PC-3 (cell line): ENCODE measurements at regions of chr3 and their contacts with region 1.

Region 1: DNA sequence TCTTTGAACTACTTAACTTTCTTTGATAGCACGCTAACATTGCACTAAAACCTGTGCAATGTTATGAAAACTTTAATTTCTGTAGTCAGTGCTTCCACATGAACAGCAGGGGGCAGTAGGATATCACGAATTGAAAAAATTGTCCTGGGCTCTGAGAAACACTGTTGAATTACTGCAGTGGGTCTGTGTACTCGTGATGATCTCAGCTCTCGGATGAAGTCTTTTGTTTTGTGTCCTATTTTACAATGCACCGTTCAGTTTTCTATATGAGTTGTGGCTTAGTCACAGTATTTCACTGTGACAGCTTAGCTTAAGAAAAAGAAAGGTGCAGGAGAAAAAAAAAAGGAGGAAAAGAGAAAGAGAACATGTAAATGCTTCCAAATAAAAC is 141.3 kb upstream of the CCDC54 start:
- DNase-seq: peak; percentile 95
- ATAC-seq: peak; percentile 81
- H3K4me3 ChIP-seq: peak overlapping the region; percentile 73
- H3K27ac ChIP-seq: peak overlapping the region; percentile 28
- H3K4me1 ChIP-seq: peaks cover 15% of the 10 kb centered on the region
- H3K27me3 ChIP-seq: no peaks in the 10 kb centered on the region
- CTCF ChIP-seq: peak; percentile 98

Region 2: DNA sequence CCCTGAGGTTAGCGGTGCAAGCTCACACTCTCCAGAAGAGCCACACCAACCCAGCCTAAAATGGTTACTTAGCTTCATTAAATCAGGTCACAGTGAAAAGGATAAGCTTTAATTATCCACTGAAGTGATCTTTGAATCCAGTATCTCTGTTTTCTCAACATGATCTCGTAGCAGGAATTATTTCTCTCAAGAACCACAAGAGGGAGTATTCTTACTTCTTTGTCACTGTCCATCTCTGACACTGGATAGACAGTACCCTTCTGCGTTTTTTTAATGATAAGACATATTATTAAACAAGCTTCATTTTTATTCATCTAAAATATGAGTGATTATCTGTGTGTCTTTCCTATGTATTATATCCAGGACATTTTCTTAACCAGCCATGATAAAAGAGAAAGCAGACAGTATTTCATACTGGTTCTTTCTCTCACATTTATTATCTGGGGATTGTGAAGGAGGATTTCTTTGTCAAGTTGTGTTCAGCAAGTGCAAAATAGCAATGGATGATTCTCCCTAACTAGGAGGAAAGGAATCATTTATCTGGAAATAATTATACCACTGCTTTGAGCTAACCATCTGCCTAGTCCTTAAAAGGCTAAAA is 36.0 kb after region 1 on chr3:
- CTCF ChIA-PET with region 1: interaction called, 12 read pairs
- POLR2A ChIA-PET with region 1: no interaction called
- intact Hi-C with region 1: loop called (anchors 1 kb)
- DNase-seq: peak; percentile 60
- ATAC-seq: peak; percentile 88
- H3K4me3 ChIP-seq: no peak overlapping the region
- H3K27ac ChIP-seq: no peak overlapping the region
- H3K4me1 ChIP-seq: no peaks in the 10 kb centered on the region
- H3K27me3 ChIP-seq: no peaks in the 10 kb centered on the region
- CTCF ChIP-seq: peak; percentile 92

Region 3: GRCh38 chr3:107328069-107328468 is 92.1 kb after region 1 on chr3:
- CTCF ChIA-PET with region 1: no interaction called
- POLR2A ChIA-PET with region 1: no interaction called
- intact Hi-C with region 1: no loop called
- DNase-seq: no peak
- ATAC-seq: no peak
- H3K4me3 ChIP-seq: no peak overlapping the region
- H3K27ac ChIP-seq: no peak overlapping the region
- H3K4me1 ChIP-seq: no peaks in the 10 kb centered on the region
- H3K27me3 ChIP-seq: no peaks in the 10 kb centered on the region
- CTCF ChIP-seq: no peak

Region 4: DNA sequence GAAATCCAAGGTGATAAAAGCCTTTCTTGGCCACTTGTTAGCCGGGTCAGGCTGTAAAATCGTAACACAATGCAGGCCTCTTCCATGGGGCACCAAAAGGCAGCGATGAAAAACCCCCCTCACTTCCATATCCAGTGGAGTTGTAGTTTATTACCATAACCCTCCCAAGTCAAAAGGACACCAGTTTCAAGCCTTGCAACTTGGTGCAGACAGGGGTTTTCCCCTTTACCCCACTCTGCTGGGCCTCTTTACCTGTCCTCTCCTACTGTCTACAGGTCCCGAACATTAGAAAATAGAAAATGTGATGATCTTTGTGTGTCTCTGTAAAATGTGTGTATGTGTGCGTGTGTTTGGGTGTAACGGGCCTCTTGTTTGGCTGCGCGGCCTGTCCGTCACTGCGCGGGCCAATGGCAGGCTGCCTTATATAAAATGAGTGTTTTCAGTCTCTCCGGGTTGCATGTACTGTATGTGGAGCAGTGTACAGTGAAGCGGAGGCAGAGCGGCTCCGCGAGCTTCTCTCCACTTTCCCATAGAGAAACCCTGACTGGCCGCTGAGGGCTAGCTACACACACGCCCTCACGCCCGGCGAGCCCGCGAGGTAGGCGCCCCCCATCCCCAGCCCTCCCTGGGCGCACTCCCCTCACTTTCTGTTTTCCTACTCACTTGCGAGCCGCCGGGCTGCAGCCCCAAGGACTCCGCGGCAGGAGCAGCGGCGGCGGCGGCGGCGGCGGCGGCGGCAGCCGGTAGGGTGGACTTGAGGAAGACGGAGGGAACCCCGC is 286.8 kb after region 1 on chr3 and contains the start of gene BBX:
- CTCF ChIA-PET with region 1: interaction called, 7 read pairs
- POLR2A ChIA-PET with region 1: no interaction called
- intact Hi-C with region 1: loop called (anchors 2 kb)
- DNase-seq: peak; percentile 93
- ATAC-seq: peak; percentile 83
- H3K4me3 ChIP-seq: peak within 1 kb of the TSS; percentile 90
- H3K27ac ChIP-seq: peak within 1 kb of the TSS; percentile 12; the same call in 1 of the 2 replicates
- H3K4me1 ChIP-seq: peaks cover 14% of the 10 kb centered on the region
- H3K27me3 ChIP-seq: no peaks in the 10 kb centered on the region
- CTCF ChIP-seq: no peak
- total RNA-seq, gene BBX: 45.8 and 66.8 TPM in 2 replicates

Region 5: DNA sequence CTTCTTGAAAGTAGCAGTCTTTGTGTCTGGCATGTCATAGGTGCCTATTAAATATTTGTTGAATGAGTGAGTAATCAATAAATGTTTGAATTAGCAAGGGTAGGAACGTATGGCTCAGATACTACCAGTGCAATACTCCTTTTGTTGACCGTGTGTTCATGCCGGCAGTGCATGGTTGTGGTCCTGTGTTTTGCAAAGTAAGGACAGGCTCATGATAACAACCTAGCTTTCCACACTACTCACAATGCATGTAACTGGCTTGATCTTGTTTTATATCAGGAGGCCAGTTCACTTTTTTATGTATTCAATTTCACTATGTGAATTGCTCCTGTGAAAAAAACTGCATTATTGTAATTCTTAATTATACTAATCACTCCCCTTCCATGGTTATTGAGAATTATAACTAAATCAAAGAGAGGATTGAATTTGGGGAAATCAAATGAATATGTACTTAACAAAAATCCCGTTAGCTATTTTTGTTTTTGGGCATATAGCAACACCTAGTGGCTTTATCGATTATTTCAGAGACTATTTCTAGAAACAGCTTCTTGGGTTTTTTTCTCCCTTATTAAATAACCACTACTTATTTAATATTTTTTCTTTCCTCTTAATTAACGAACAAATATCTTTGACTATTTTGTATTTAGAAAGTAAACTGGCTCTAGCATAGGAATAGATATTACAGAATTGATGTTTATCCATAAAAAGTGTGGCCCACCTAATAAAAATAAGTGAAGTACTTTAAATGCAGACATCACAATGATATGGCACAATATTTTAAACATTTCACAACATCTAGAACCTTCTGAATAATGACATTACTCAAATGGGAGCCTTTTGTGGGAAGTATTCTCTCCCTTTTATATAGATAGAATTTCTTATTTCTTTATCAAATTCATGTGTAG is 505.3 kb after region 1 on chr3:
- CTCF ChIA-PET with region 1: no interaction called
- POLR2A ChIA-PET with region 1: no interaction called
- intact Hi-C with region 1: loop called (anchors 5 kb)
- DNase-seq: peak; percentile 61
- ATAC-seq: peak; percentile 78
- H3K4me3 ChIP-seq: no peak overlapping the region
- H3K27ac ChIP-seq: no peak overlapping the region
- H3K4me1 ChIP-seq: no peaks in the 10 kb centered on the region
- H3K27me3 ChIP-seq: no peaks in the 10 kb centered on the region
- CTCF ChIP-seq: peak; percentile 81

Region 6: GRCh38 chr3:107927361-107928083 is 691.6 kb after region 1 on chr3:
- CTCF ChIA-PET with region 1: interaction called, 5 read pairs
- POLR2A ChIA-PET with region 1: no interaction called
- intact Hi-C with region 1: loop called (anchors 10 kb)
- DNase-seq: peak; percentile 91
- ATAC-seq: peak; percentile 96
- H3K4me3 ChIP-seq: peak overlapping the region; percentile 76
- H3K27ac ChIP-seq: peak overlapping the region; percentile 18
- H3K4me1 ChIP-seq: peaks cover 6% of the 10 kb centered on the region; the same call in 1 of the 2 replicates
- H3K27me3 ChIP-seq: no peaks in the 10 kb centered on the region
- CTCF ChIP-seq: peak; percentile 97

Region 7: DNA sequence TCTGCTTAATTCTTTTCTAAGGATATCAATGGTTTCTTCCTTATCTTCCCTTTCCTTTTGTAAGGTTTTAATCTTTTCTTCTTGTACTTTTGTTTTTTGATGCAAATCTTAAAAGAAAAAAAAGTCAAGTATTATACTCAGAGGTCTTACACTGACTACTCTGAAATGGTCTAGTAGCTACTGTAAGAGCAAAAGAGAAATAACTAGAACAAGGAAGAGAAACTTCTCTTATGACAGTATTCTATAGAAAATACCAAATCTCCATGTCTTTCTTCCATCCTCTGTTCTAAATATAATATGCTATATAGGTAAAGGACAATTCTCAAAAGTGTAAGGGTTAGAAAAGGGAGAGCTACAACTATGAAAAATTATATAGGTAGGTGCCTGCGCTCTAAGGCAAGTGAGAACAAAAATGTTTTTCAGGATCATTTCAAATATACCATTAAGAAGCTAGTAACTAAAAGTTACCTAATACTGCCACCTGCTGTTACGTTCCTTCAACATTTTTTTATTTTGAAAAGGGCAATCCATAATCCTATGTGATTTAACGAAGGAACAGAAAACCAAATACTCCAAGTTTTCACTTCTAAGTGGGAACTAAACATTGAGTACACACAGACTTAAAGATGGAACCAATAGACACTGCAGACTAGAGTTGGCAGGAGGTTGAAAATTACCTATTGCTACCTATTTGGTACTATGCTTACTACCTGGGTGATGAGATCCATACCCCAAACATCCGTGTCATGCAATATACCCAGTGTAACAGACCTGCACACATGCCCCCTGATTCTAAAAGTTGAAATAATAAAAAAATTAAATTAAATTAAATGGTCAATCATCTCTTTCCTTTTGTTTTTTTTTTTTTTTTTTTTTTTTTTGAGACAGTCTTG is 1316.6 kb after region 1 on chr3:
- CTCF ChIA-PET with region 1: interaction called, 4 read pairs
- POLR2A ChIA-PET with region 1: no interaction called
- intact Hi-C with region 1: loop called (anchors 10 kb)
- DNase-seq: peak; percentile 76
- ATAC-seq: no peak
- H3K4me3 ChIP-seq: no peak overlapping the region
- H3K27ac ChIP-seq: no peak overlapping the region
- H3K4me1 ChIP-seq: peaks cover 38% of the 10 kb centered on the region
- H3K27me3 ChIP-seq: no peaks in the 10 kb centered on the region
- CTCF ChIP-seq: peak; percentile 77